ENCODE measurements at regions of chr22 and their contacts with region 1.

Region 1: DNA sequence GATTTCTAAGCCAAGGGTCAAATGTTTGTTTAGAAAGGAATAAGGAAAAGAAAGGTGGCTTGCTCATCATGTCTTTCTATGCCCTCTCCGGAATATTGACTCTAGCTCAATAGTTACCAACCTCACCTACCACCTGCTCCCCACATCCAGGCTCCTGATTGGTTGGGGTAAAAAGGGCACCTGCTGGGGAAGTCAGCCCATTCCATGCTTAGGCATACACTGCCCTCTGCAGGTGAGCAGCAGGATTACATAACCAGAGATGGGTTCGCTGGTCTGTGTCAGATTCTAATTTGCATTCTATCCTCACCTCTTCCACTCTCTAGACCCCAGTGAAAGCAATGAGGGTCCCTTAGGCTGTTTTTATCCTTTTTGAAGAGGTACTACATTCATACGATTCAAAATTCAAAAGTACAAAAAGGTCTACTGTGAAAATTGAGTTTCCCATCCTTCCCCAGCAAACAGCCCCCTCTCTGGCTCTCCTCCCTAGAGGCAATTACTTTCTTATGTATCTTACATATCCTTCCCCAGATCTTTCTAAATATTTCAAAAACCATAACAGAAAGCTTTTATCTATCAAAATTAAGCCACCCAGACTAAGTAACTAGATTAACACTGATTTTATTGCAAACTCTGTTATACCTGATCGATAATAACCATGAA is 98.0 kb upstream of the ASPHD2 start:
- DNase-seq: peak; percentile 35 to 54 (median 44)
- H3K4me3 ChIP-seq: no peak overlapping the region
- H3K4me3 Mint-ChIP-seq: no peak overlapping the region
- H3K27ac ChIP-seq: no peak overlapping the region
- H3K27ac Mint-ChIP-seq: no peak overlapping the region
- H3K4me1 ChIP-seq: no peaks in the 10 kb centered on the region
- H3K4me1 Mint-ChIP-seq: peaks cover 0 to 2% (median 0%) of the 10 kb centered on the region in 4 donors
- H3K27me3 ChIP-seq: no peaks in the 10 kb centered on the region
- H3K27me3 Mint-ChIP-seq: peaks cover 13 to 24% of the 10 kb centered on the region in 2 donors

Region 2: DNA sequence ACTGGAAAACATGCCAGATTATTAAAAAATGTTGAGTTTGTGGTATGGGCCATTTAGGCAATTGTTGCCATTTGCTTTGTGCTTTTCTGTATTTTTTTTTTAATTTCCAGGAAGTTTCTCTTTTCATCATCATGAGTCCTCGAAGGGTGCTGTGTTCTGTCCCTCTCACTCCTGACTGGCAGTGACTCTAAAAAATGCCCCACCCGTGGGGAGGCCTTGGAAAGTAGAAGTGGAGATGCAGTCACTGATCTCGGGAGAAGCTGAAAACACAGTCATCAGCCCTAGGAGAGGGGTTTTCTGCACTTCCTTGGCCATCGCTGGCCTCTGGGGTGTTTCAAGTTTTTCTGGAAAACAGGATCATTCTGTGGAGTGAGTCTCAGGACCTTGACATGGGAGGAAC is 865.1 kb before region 1 on chr22:
- CTCF ChIA-PET with region 1: interaction called, 3 read pairs
- POLR2A ChIA-PET with region 1: no interaction called
- intact Hi-C with region 1: loop called (anchors 2 kb)
- DNase-seq: no peak
- H3K4me3 ChIP-seq: no peak overlapping the region
- H3K4me3 Mint-ChIP-seq: no peak overlapping the region
- H3K27ac ChIP-seq: no peak overlapping the region
- H3K27ac Mint-ChIP-seq: peak overlapping the region in 1 of 7 donors; percentile 63
- H3K4me1 ChIP-seq: no peaks in the 10 kb centered on the region
- H3K4me1 Mint-ChIP-seq: peaks cover 0 to 7% (median 5%) of the 10 kb centered on the region in 4 donors
- H3K27me3 ChIP-seq: no peaks in the 10 kb centered on the region
- H3K27me3 Mint-ChIP-seq: no peaks in the 10 kb centered on the region

Region 3: GRCh38 chr22:25777870-25778269 is 553.2 kb before region 1 on chr22:
- CTCF ChIA-PET with region 1: no interaction called
- POLR2A ChIA-PET with region 1: no interaction called
- intact Hi-C with region 1: loop called (anchors 5 kb)
- DNase-seq: no peak
- H3K4me3 ChIP-seq: no peak overlapping the region
- H3K4me3 Mint-ChIP-seq: no peak overlapping the region
- H3K27ac ChIP-seq: no peak overlapping the region
- H3K27ac Mint-ChIP-seq: no peak overlapping the region
- H3K4me1 ChIP-seq: peaks cover 2% of the 10 kb centered on the region
- H3K4me1 Mint-ChIP-seq: peaks cover 2 to 3% (median 2%) of the 10 kb centered on the region in 4 donors
- H3K27me3 ChIP-seq: no peaks in the 10 kb centered on the region
- H3K27me3 Mint-ChIP-seq: peaks cover 0 to 5% of the 10 kb centered on the region in 2 donors

Region 4: DNA sequence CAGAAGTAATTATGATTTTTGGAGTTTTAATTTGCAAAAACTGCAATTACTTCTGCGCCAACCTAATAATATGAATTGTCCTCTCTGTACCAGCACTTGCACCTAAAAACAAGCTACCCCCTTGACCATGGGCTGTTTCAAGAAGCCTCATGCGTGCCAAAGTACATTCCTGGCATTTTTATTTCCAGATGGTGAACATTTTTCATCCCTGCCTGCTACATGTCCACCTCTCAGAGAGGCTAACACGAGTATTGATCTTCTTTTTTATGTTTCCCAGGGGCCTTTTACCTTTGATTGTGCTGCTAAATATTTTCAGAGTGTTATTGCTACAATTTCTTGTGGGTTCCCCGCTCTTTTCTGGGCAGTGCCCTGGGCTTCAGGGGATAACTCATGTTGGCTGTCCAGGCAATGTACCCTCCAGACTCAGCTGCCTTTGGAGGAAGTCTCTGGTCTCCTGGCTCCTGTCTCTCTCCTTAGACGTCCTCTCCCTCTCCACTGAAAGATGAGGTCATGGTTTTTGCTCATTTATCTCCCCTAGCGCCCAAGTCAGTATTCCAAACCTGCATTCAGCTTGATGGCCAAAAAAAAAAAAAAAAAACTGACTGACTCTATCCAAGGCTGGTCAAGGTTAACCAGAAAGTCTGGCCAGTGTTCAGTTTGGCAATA is 11.8 kb after region 1 on chr22:
- CTCF ChIA-PET with region 1: interaction called, 10 read pairs
- POLR2A ChIA-PET with region 1: no interaction called
- intact Hi-C with region 1: no loop called
- DNase-seq: no peak
- H3K4me3 ChIP-seq: no peak overlapping the region
- H3K4me3 Mint-ChIP-seq: no peak overlapping the region
- H3K27ac ChIP-seq: no peak overlapping the region
- H3K27ac Mint-ChIP-seq: no peak overlapping the region
- H3K4me1 ChIP-seq: no peaks in the 10 kb centered on the region
- H3K4me1 Mint-ChIP-seq: no peaks in the 10 kb centered on the region
- H3K27me3 ChIP-seq: no peaks in the 10 kb centered on the region
- H3K27me3 Mint-ChIP-seq: peaks cover 29 to 39% of the 10 kb centered on the region in 2 donors

Region 5: GRCh38 chr22:26360169-26360885 is 29.2 kb after region 1 on chr22:
- CTCF ChIA-PET with region 1: no interaction called
- POLR2A ChIA-PET with region 1: no interaction called
- intact Hi-C with region 1: no loop called
- DNase-seq: peak; percentile 51 to 62 (median 52)
- H3K4me3 ChIP-seq: no peak overlapping the region
- H3K4me3 Mint-ChIP-seq: peak overlapping the region in 1 of 8 donors; percentile 41
- H3K27ac ChIP-seq: no peak overlapping the region
- H3K27ac Mint-ChIP-seq: no peak overlapping the region
- H3K4me1 ChIP-seq: peaks cover 4% of the 10 kb centered on the region
- H3K4me1 Mint-ChIP-seq: peaks cover 4 to 6% (median 5%) of the 10 kb centered on the region in 4 donors
- H3K27me3 ChIP-seq: peaks cover 11% of the 10 kb centered on the region
- H3K27me3 Mint-ChIP-seq: peaks cover 6 to 19% of the 10 kb centered on the region in 2 donors

Region 6: GRCh38 chr22:26374391-26375026 is 43.4 kb after region 1 on chr22:
- CTCF ChIA-PET with region 1: no interaction called
- POLR2A ChIA-PET with region 1: no interaction called
- intact Hi-C with region 1: no loop called
- DNase-seq: no peak
- H3K4me3 ChIP-seq: no peak overlapping the region
- H3K4me3 Mint-ChIP-seq: no peak overlapping the region
- H3K27ac ChIP-seq: no peak overlapping the region
- H3K27ac Mint-ChIP-seq: no peak overlapping the region
- H3K4me1 ChIP-seq: peaks cover 6% of the 10 kb centered on the region
- H3K4me1 Mint-ChIP-seq: peaks cover 4 to 7% (median 5%) of the 10 kb centered on the region in 4 donors
- H3K27me3 ChIP-seq: no peaks in the 10 kb centered on the region
- H3K27me3 Mint-ChIP-seq: peaks cover 37 to 39% of the 10 kb centered on the region in 2 donors

Measured in CD4-positive, alpha-beta memory T cell (primary cell).